A549 (cell line): ENCODE measurements at regions of chr17 and their contacts with region 1.

Region 1: GRCh38 chr17:19744922-19745757 is 3.0 kb downstream of the ALDH3A1 start:
- DNase-seq: peak; percentile 75 to 89
- ATAC-seq: peak; percentile 12 to 62; a peak in 5 of 6 replicates
- H3K4me3 ChIP-seq: peak overlapping the region; percentile 53; the same call in 2 of the 3 replicates
- H3K27ac ChIP-seq: peak overlapping the region; percentile 98 to 100
- H3K4me1 ChIP-seq: peaks cover 80% of the 10 kb centered on the region
- CTCF ChIP-seq: peak; percentile 81
- EP300 ChIP-seq: no peak
- POLR2A ChIP-seq: peak; percentile 52
- RAD21 ChIP-seq: peak; percentile 55 to 64

Region 2: GRCh38 chr17:19706791-19707727 is 38.1 kb before region 1 on chr17:
- CTCF ChIA-PET with region 1: interaction called, 17 read pairs
- POLR2A ChIA-PET with region 1: interaction called, 3 read pairs
- DNase-seq: no peak
- ATAC-seq: peak in 1 of 2 experiments; percentile 6; a peak in 3 of 6 replicates
- H3K4me3 ChIP-seq: no peak overlapping the region
- H3K27ac ChIP-seq: peak overlapping the region in 1 of 2 experiments; percentile 25; a peak in 1 of 6 replicates
- H3K4me1 ChIP-seq: peaks cover 7% of the 10 kb centered on the region; the same call in 1 of the 3 replicates
- CTCF ChIP-seq: no peak
- EP300 ChIP-seq: no peak
- POLR2A ChIP-seq: no peak
- RAD21 ChIP-seq: no peak

Region 3: DNA sequence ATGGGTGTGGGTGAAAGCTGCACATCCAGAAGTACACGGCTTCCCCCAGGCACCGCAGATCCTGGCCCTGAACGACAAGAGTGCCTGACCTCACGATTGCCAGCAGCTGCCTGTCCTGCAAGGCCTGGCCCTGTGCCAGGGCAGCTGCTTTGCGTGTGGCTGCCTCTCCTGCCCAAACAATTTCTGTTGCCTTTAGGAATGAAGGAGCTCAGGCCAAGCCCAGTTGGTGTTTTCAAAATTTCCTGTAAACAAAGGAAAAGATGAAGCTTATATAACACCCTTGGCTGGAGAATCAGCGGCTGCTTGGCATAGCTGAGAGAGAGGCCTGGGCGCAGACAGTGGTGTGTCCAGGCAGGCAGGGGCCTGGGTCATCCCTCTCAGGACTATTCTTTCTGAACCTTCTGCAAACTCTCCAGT is 17.1 kb before region 1 on chr17:
- CTCF ChIA-PET with region 1: interaction called, 115 read pairs
- POLR2A ChIA-PET with region 1: interaction called, 18 read pairs
- DNase-seq: peak in 1 of 2 experiments; percentile 69
- ATAC-seq: peak; percentile 52 to 54; a peak in 5 of 6 replicates
- H3K4me3 ChIP-seq: no peak overlapping the region
- H3K27ac ChIP-seq: peak overlapping the region; percentile 67 to 82
- H3K4me1 ChIP-seq: peaks cover 35% of the 10 kb centered on the region
- CTCF ChIP-seq: no peak
- EP300 ChIP-seq: no peak
- POLR2A ChIP-seq: no peak
- RAD21 ChIP-seq: no peak

Region 4: DNA sequence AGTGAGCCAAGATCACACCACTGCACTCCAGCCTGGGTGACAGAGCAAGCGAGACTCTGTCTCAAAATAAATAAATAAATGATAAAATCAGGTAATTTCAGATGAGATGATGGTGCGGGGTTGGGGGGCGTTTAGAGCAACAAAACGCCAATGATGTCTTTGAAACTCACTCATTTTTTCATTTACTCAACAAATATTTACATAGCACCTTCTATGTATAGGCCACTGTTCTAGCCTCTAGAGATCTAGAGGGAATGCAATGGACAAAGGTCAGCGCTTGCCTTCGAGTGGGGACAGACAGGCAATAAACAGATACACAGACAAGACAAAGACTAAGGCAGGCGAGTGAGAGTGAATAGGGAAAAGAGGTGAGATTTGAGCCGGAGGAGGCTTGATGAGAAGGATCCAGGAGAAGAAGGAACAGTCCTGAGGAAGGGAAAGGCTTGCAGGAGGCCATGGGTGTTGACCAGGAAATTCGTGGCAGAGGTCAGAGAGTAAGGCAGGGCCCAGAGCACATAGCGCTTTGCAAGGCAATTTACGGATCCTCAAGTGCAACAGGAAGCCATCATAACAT is 11.1 kb before region 1 on chr17:
- CTCF ChIA-PET with region 1: interaction called, 115 read pairs
- POLR2A ChIA-PET with region 1: interaction called, 18 read pairs
- DNase-seq: no peak
- ATAC-seq: peak in 1 of 2 experiments; percentile 12; a peak in 2 of 6 replicates
- H3K4me3 ChIP-seq: no peak overlapping the region
- H3K27ac ChIP-seq: peak overlapping the region; percentile 0 to 68; a peak in 4 of 6 replicates
- H3K4me1 ChIP-seq: peaks cover 49% of the 10 kb centered on the region
- CTCF ChIP-seq: no peak
- EP300 ChIP-seq: no peak
- POLR2A ChIP-seq: no peak
- RAD21 ChIP-seq: no peak

Region 5: DNA sequence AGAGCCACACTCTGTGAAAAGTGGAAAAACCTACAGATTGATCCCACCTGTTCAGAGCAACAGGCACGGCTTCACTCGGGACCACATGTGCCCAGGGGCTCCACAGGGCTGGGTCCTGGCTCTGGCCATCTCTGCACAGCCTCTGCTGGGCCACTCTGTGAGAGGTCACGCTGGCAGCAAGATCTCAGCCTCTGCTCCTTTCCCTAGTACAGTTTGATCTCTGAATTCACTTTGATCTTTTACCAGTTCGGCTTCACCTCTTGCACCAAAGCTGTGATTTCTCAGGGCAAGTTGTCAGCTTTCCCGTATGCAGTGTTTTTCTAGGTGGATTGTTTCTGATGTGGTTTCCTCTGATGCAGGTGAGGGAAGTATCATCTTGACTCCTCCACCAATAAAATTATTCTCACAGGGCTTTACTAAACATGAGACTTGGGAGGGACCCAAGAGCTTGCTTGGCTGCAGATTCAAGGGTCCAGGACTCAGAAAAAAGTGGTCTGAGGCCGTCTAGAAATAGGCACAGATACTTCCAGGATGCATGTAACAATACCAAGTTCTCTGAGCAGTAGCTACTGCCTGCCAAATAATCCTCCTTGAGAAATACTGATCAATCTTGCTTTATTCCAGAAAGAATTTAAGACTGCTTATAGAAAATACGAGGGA is 27.0 kb after region 1 on chr17:
- CTCF ChIA-PET with region 1: interaction called, 681 read pairs
- POLR2A ChIA-PET with region 1: no interaction called
- DNase-seq: no peak
- ATAC-seq: peak in 1 of 2 experiments; percentile 15; a peak in 2 of 6 replicates
- H3K4me3 ChIP-seq: no peak overlapping the region
- H3K27ac ChIP-seq: no peak overlapping the region
- H3K4me1 ChIP-seq: no peaks in the 10 kb centered on the region
- CTCF ChIP-seq: no peak
- EP300 ChIP-seq: no peak
- POLR2A ChIP-seq: no peak
- RAD21 ChIP-seq: no peak